ENCODE measurements at regions of chr2 and their contacts with region 1.

Region 1: GRCh38 chr2:85813982-85814801 is 60.4 kb downstream of the ATOH8 start:
- DNase-seq: peak; percentile 91
- H3K4me3 ChIP-seq: no peak overlapping the region
- H3K27ac ChIP-seq: no peak overlapping the region
- H3K4me1 ChIP-seq: no peaks in the 10 kb centered on the region
- H3K27me3 ChIP-seq: no peaks in the 10 kb centered on the region
- CTCF ChIP-seq: peak; percentile 90 to 97 (median 94)
- POLR2A ChIP-seq: peak in 1 of 2 donors; percentile 15

Region 2: DNA sequence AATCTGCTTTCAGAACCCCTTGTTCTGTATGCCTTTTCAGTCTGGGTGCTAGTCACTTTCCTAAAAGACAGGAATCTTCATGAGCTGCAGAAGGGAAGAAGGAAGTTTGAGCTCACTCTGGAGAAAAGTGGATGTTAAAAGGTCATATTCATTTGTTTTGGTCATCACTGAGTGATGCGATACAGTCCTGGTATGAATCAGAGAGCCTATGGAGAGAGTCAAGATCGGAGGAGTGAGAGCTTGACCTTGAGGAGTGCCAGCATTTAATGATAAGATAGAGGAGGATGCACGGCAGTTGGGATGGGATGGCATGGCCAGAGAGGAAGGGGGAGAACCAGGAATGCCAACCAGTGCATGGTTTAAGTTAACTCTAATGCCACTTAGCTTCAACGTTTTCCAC is 178.6 kb before region 1 on chr2:
- intact Hi-C with region 1: loop called (anchors 10 kb)
- DNase-seq: no peak
- H3K4me3 ChIP-seq: no peak overlapping the region
- H3K27ac ChIP-seq: no peak overlapping the region
- H3K4me1 ChIP-seq: no peaks in the 10 kb centered on the region
- H3K27me3 ChIP-seq: no peaks in the 10 kb centered on the region
- CTCF ChIP-seq: no peak
- POLR2A ChIP-seq: no peak

Region 3: GRCh38 chr2:85718009-85718391 is 96.2 kb before region 1 on chr2:
- intact Hi-C with region 1: no loop called
- DNase-seq: no peak
- H3K4me3 ChIP-seq: no peak overlapping the region
- H3K27ac ChIP-seq: no peak overlapping the region
- H3K4me1 ChIP-seq: no peaks in the 10 kb centered on the region
- H3K27me3 ChIP-seq: no peaks in the 10 kb centered on the region
- CTCF ChIP-seq: no peak
- POLR2A ChIP-seq: no peak

Region 4: GRCh38 chr2:85728883-85729824 is 85.0 kb before region 1 on chr2:
- intact Hi-C with region 1: loop called (anchors 2 kb)
- DNase-seq: peak; percentile 90 to 93
- H3K4me3 ChIP-seq: no peak overlapping the region
- H3K27ac ChIP-seq: peak overlapping the region; percentile 29 to 56
- H3K4me1 ChIP-seq: peaks cover 0 to 4% of the 10 kb centered on the region in 2 donors
- H3K27me3 ChIP-seq: no peaks in the 10 kb centered on the region
- CTCF ChIP-seq: peak; percentile 96 to 99 (median 98)
- POLR2A ChIP-seq: no peak

Region 5: DNA sequence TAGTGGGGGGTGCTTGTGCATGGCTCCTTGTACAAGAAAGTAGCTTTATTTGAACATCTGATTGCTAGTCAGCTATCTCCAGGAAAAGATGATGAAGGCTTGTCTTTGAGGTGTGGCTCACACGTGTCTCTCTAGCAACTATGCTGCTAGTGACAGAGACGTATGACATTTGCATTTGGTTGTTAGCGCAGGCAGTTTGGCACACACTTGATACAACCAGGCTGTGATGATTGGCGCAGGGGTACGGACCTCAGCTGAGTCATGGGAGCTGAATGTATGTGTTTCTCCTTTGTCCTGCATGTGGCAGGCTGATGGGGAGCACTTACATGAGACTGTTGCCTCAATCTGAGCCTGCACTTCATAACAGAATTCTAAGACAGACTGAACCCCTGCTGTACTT is 321.5 kb after region 1 on chr2:
- intact Hi-C with region 1: no loop called
- DNase-seq: no peak
- H3K4me3 ChIP-seq: no peak overlapping the region
- H3K27ac ChIP-seq: no peak overlapping the region
- H3K4me1 ChIP-seq: no peaks in the 10 kb centered on the region
- H3K27me3 ChIP-seq: no peaks in the 10 kb centered on the region
- CTCF ChIP-seq: no peak
- POLR2A ChIP-seq: no peak